ENCODE measurements at regions of chr11 and their contacts with region 1.

Region 1: DNA sequence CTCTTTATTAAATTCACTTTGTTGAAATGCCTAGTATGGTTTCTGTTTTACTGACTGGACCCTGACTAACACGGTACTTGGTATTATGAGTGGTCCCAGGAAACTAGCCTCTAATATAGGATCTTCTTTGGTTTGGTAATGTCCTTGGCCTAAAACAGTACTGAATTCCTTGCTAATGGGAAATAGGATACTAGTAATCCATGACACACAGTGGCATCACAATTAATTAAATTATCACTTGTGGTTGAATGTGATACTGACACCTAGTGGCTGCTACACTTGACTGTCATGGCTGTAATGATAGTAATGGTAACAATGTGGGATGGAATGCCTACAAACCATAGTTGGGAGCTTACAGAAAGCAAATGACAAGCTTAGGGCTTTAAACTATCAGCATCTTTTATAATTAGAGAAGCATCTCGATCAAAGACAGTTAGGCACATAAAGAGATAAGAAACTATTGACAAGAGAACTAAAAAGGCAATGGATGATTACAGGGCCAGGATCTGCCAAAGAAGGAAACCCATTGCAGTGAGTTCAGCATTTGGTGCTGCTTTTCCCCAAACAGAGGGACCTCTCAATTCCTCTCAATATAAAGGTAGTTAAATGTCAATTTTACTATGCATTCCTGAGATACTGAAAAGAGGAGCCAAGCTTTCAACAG is 8.6 kb downstream of the DNHD1 start:
- DNase-seq: no peak
- ATAC-seq: peak in 1 of 2 donors; percentile 36
- H3K4me3 ChIP-seq: no peak overlapping the region
- H3K27ac ChIP-seq: no peak overlapping the region
- H3K4me1 ChIP-seq: no peaks in the 10 kb centered on the region
- H3K27me3 ChIP-seq: no peaks in the 10 kb centered on the region
- CTCF ChIP-seq: peak; percentile 43 to 72 (median 53)
- POLR2A ChIP-seq: no peak

Region 2: GRCh38 chr11:6377902-6378639 is 127.6 kb before region 1 on chr11:
- in situ Hi-C with region 1: loop called in 2 of 4 experiments (anchors 10 kb)
- intact Hi-C with region 1: loop called (anchors 2 kb)
- DNase-seq: no peak
- ATAC-seq: peak in 1 of 2 donors; percentile 40
- H3K4me3 ChIP-seq: no peak overlapping the region
- H3K27ac ChIP-seq: peak overlapping the region in 1 of 4 donors; percentile 3
- H3K4me1 ChIP-seq: no peaks in the 10 kb centered on the region
- H3K27me3 ChIP-seq: no peaks in the 10 kb centered on the region
- CTCF ChIP-seq: no peak
- POLR2A ChIP-seq: no peak

Measured in gastrocnemius medialis (tissue), 4 donors.